Calu3 (cell line): ENCODE measurements at regions of chr6 and their contacts with region 1.

Region 1: GRCh38 chr6:47490676-47491075 is 13.1 kb downstream of the CD2AP start:
- DNase-seq: no peak
- H3K4me3 Mint-ChIP-seq: no peak overlapping the region
- H3K27ac Mint-ChIP-seq: peak overlapping the region; percentile 54
- H3K4me1 Mint-ChIP-seq: peaks cover 66% of the 10 kb centered on the region
- H3K27me3 Mint-ChIP-seq: no peaks in the 10 kb centered on the region
- CTCF ChIP-seq: no peak

Region 2: GRCh38 chr6:47309291-47310130 is 181.2 kb before region 1 on chr6 and contains the start of gene TNFRSF21:
- CTCF ChIA-PET with region 1: no interaction called
- intact Hi-C with region 1: loop called (anchors 5 kb)
- DNase-seq: peak; percentile 97
- H3K4me3 Mint-ChIP-seq: peak within 1 kb of the TSS; percentile 98
- H3K27ac Mint-ChIP-seq: peak within 1 kb of the TSS; percentile 96
- H3K4me1 Mint-ChIP-seq: peaks cover 31% of the 10 kb centered on the region
- H3K27me3 Mint-ChIP-seq: no peaks in the 10 kb centered on the region
- CTCF ChIP-seq: peak; percentile 85
- total RNA-seq, gene TNFRSF21: 255 and 282 TPM in 2 replicates

Region 3: GRCh38 chr6:47477497-47478232 is 13.0 kb before region 1 on chr6 and contains the start of gene CD2AP:
- CTCF ChIA-PET with region 1: interaction called, 3 read pairs
- intact Hi-C with region 1: loop called (anchors 2 kb)
- DNase-seq: peak; percentile 96
- H3K4me3 Mint-ChIP-seq: peak within 1 kb of the TSS; percentile 86
- H3K27ac Mint-ChIP-seq: peak within 1 kb of the TSS; percentile 94
- H3K4me1 Mint-ChIP-seq: peaks cover 42% of the 10 kb centered on the region
- H3K27me3 Mint-ChIP-seq: no peaks in the 10 kb centered on the region
- CTCF ChIP-seq: no peak
- total RNA-seq, gene CD2AP: 105 and 121 TPM in 2 replicates

Region 4: GRCh38 chr6:47525330-47526057 is 34.8 kb after region 1 on chr6:
- CTCF ChIA-PET with region 1: no interaction called
- intact Hi-C with region 1: loop called (anchors 5 kb)
- DNase-seq: no peak
- H3K4me3 Mint-ChIP-seq: no peak overlapping the region
- H3K27ac Mint-ChIP-seq: no peak overlapping the region
- H3K4me1 Mint-ChIP-seq: peaks cover 53% of the 10 kb centered on the region
- H3K27me3 Mint-ChIP-seq: no peaks in the 10 kb centered on the region
- CTCF ChIP-seq: no peak